ENCODE measurements at regions of chr5 and their contacts with region 1.

Region 1: DNA sequence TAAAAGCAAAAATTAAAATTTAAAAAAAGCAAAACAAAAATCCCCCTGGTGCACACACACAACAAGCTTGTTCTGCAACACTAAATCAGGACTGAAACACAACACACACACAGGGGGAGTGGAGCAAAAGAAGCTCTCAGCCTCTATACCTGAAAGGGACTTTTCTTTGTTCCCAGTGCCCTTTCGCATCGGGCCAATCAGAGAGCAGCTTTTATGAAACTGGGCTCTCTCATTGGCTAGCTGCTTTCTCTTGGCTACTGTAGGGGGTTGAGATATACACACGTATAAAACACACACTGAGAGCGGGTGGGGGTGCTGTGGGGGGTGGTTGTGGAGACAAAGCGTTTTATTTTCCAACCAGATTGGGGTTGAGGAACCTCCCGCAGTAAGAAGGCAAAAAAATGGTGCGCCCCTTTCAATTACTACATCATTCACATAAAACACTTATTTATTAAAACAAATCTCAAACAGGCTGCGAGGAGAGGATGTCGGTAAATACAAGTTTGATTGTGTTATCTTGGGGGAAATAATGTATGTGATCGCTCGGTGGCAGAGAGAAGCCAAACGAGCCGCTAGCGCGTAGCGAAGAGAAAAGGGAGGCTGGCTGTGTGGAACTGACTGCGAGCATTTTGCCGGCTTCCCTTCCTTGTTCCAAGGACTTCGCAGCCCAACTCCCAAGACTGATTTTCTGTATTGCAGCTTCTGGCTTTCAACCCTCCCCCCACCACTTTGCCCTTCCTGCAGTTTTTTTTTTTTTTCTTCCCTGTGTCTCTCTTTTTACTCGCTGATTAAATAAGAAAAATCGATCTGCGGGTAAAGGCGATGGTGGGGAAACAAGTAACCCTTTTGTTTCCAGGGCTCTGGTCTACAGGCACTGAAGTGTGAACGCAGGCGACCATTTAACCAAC is 2.5 kb upstream of the ZNF608 start:
- DNase-seq: peak; percentile 81
- H3K4me3 ChIP-seq: peak overlapping the region; percentile 53
- H3K27ac ChIP-seq: peak overlapping the region; percentile 30
- H3K4me1 ChIP-seq: peaks cover 5% of the 10 kb centered on the region
- H3K27me3 ChIP-seq: peaks cover 3% of the 10 kb centered on the region
- CTCF ChIP-seq: no peak

Region 2: GRCh38 chr5:124995421-124995820 is 246.5 kb after region 1 on chr5:
- CTCF ChIA-PET with region 1: no interaction called
- POLR2A ChIA-PET with region 1: no interaction called
- intact Hi-C with region 1: no loop called
- DNase-seq: no peak
- H3K4me3 ChIP-seq: no peak overlapping the region
- H3K27ac ChIP-seq: no peak overlapping the region
- H3K4me1 ChIP-seq: peaks cover 7% of the 10 kb centered on the region
- H3K27me3 ChIP-seq: no peaks in the 10 kb centered on the region
- CTCF ChIP-seq: no peak

Region 3: GRCh38 chr5:125006011-125006685 is 257.2 kb after region 1 on chr5:
- CTCF ChIA-PET with region 1: no interaction called
- POLR2A ChIA-PET with region 1: no interaction called
- intact Hi-C with region 1: loop called (anchors 5 kb)
- DNase-seq: peak; percentile 85
- H3K4me3 ChIP-seq: no peak overlapping the region
- H3K27ac ChIP-seq: no peak overlapping the region
- H3K4me1 ChIP-seq: peaks cover 17% of the 10 kb centered on the region
- H3K27me3 ChIP-seq: peaks cover 15% of the 10 kb centered on the region
- CTCF ChIP-seq: no peak

Measured in A673 (cell line).